CD8-positive, alpha-beta T cell (primary cell): ENCODE measurements at regions of chr2 and their contacts with region 1.

Region 1: GRCh38 chr2:159712143-159712928 is at the start of gene MARCHF7:
- DNase-seq: peak; percentile 94 to 99 (median 97)
- ATAC-seq: peak; percentile 90
- H3K4me3 ChIP-seq: peak within 1 kb of the TSS; percentile 100
- H3K4me3 Mint-ChIP-seq: peak within 1 kb of the TSS; percentile 100
- H3K27ac ChIP-seq: peak within 1 kb of the TSS; percentile 98
- H3K27ac Mint-ChIP-seq: peak within 1 kb of the TSS; percentile 100
- H3K4me1 ChIP-seq: peaks cover 45% of the 10 kb centered on the region
- H3K4me1 Mint-ChIP-seq: peaks cover 54% of the 10 kb centered on the region
- H3K27me3 ChIP-seq: no peaks in the 10 kb centered on the region
- H3K27me3 Mint-ChIP-seq: no peaks in the 10 kb centered on the region
- CTCF ChIP-seq: peak; percentile 25
- total RNA-seq, gene MARCHF7: 76.5 to 76.6 TPM

Region 2: DNA sequence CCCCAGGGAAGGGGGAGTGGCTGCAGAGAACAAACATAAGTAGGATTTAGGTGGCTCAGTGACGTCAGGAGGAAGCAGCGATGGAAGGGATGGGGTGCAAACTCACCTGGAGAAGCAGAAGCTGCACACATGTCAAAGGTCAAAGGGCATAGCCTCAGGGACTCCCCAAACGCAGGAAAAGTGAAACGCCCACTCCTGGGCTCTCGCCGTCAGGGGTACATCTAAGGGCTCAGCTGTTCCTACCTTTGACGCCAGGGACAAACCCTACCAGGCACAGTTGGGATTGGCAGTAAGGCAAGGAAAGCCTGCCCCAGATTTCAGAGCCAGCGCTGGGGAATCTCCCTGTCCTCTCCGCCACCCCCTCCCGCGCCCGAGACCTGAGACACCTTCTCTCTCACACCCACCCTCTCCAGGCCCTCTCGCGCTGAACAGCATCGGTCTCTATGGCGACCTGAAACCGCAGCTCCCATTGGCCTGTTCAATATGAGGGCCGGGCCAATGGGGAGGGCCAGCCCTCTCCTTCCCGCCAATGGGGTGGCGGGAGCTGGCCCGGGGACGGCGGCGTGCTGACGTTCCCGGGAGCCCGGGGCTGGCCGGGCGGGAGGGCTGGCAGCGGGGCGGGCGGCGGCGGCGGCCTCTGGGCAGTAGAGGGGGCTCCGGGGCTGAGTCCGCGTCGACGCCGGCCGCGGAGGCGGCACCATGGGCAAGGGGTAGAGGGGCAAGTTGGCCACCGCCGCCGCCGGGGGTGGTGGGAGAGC is 1255.8 kb before region 1 on chr2 and contains the starts of genes CCDC148 and PKP4:
- CTCF ChIA-PET with region 1: no interaction called
- POLR2A ChIA-PET with region 1: no interaction called
- intact Hi-C with region 1: loop called (anchors 5 kb)
- DNase-seq: peak; percentile 74 to 97 (median 86)
- ATAC-seq: peak; percentile 91
- H3K4me3 ChIP-seq: peak within 1 kb of the TSS; percentile 69 to 81
- H3K4me3 Mint-ChIP-seq: peak within 1 kb of the TSS; percentile 96
- H3K27ac ChIP-seq: peak within 1 kb of the TSS; percentile 23 to 49
- H3K27ac Mint-ChIP-seq: peak within 1 kb of the TSS; percentile 76
- H3K4me1 ChIP-seq: peaks cover 12% of the 10 kb centered on the region
- H3K4me1 Mint-ChIP-seq: peaks cover 16% of the 10 kb centered on the region
- H3K27me3 ChIP-seq: no peaks in the 10 kb centered on the region
- H3K27me3 Mint-ChIP-seq: peaks cover 13% of the 10 kb centered on the region
- CTCF ChIP-seq: no peak
- total RNA-seq, gene CCDC148: not detected
- total RNA-seq, gene PKP4: 5.7 to 8.1 TPM

Region 3: GRCh38 chr2:159286709-159287441 is 425.5 kb before region 1 on chr2:
- CTCF ChIA-PET with region 1: no interaction called
- POLR2A ChIA-PET with region 1: interaction called, 7 read pairs
- intact Hi-C with region 1: loop called (anchors 1 to 2 kb)
- DNase-seq: peak; percentile 93 to 99 (median 97)
- ATAC-seq: peak; percentile 99
- H3K4me3 ChIP-seq: peak overlapping the region; percentile 65 to 86
- H3K4me3 Mint-ChIP-seq: peak overlapping the region; percentile 90
- H3K27ac ChIP-seq: peak overlapping the region; percentile 58 to 69
- H3K27ac Mint-ChIP-seq: peak overlapping the region; percentile 86
- H3K4me1 ChIP-seq: peaks cover 18% of the 10 kb centered on the region
- H3K4me1 Mint-ChIP-seq: peaks cover 33% of the 10 kb centered on the region
- H3K27me3 ChIP-seq: no peaks in the 10 kb centered on the region
- H3K27me3 Mint-ChIP-seq: no peaks in the 10 kb centered on the region
- CTCF ChIP-seq: no peak

Region 4: GRCh38 chr2:159615140-159615951 is 97.0 kb before region 1 on chr2:
- CTCF ChIA-PET with region 1: no interaction called
- POLR2A ChIA-PET with region 1: no interaction called
- intact Hi-C with region 1: loop called in 1 of 2 experiments (anchors 5 kb)
- DNase-seq: peak in 8 of 9 experiments; percentile 15 to 68 (median 34)
- ATAC-seq: peak; percentile 68
- H3K4me3 ChIP-seq: peak overlapping the region; percentile 60 to 65
- H3K4me3 Mint-ChIP-seq: peak overlapping the region; percentile 84
- H3K27ac ChIP-seq: no peak overlapping the region
- H3K27ac Mint-ChIP-seq: no peak overlapping the region
- H3K4me1 ChIP-seq: no peaks in the 10 kb centered on the region
- H3K4me1 Mint-ChIP-seq: peaks cover 17% of the 10 kb centered on the region
- H3K27me3 ChIP-seq: no peaks in the 10 kb centered on the region
- H3K27me3 Mint-ChIP-seq: peaks cover 20% of the 10 kb centered on the region
- CTCF ChIP-seq: no peak

Region 5: GRCh38 chr2:159755788-159756187 is 43.5 kb after region 1 on chr2:
- CTCF ChIA-PET with region 1: interaction called, 3 read pairs
- POLR2A ChIA-PET with region 1: interaction called, 9 read pairs
- intact Hi-C with region 1: loop called in 1 of 2 experiments (anchors 5 kb)
- DNase-seq: peak in 2 of 9 experiments; percentile 10 to 24
- ATAC-seq: peak; percentile 61
- H3K4me3 ChIP-seq: no peak overlapping the region
- H3K4me3 Mint-ChIP-seq: no peak overlapping the region
- H3K27ac ChIP-seq: no peak overlapping the region
- H3K27ac Mint-ChIP-seq: no peak overlapping the region
- H3K4me1 ChIP-seq: no peaks in the 10 kb centered on the region
- H3K4me1 Mint-ChIP-seq: peaks cover 32% of the 10 kb centered on the region
- H3K27me3 ChIP-seq: no peaks in the 10 kb centered on the region
- H3K27me3 Mint-ChIP-seq: no peaks in the 10 kb centered on the region
- CTCF ChIP-seq: no peak

Region 6: GRCh38 chr2:161160226-161161069 is 1448.1 kb after region 1 on chr2 and contains the start of gene TANK:
- CTCF ChIA-PET with region 1: no interaction called
- POLR2A ChIA-PET with region 1: no interaction called
- intact Hi-C with region 1: loop called (anchors 5 to 10 kb)
- DNase-seq: peak; percentile 77 to 96 (median 87)
- ATAC-seq: peak; percentile 91
- H3K4me3 ChIP-seq: peak within 1 kb of the TSS; percentile 72 to 97
- H3K4me3 Mint-ChIP-seq: peak within 1 kb of the TSS; percentile 96
- H3K27ac ChIP-seq: peak within 1 kb of the TSS; percentile 70 to 96
- H3K27ac Mint-ChIP-seq: peak within 1 kb of the TSS; percentile 93
- H3K4me1 ChIP-seq: peaks cover 21% of the 10 kb centered on the region
- H3K4me1 Mint-ChIP-seq: peaks cover 51% of the 10 kb centered on the region
- H3K27me3 ChIP-seq: no peaks in the 10 kb centered on the region
- H3K27me3 Mint-ChIP-seq: no peaks in the 10 kb centered on the region
- CTCF ChIP-seq: no peak
- total RNA-seq, gene TANK: 63.0 to 79.1 TPM